Gastrocnemius medialis (tissue), 4 donors: ENCODE measurements at regions of chr9 and their contacts with region 1.

Region 1: GRCh38 chr9:99266255-99267023 is 44.4 kb downstream of the SEC61B start:
- DNase-seq: peak; percentile 53 to 81
- ATAC-seq: peak; percentile 69 to 85
- H3K4me3 ChIP-seq: no peak overlapping the region
- H3K27ac ChIP-seq: peak overlapping the region; percentile 35 to 61 (median 44)
- H3K4me1 ChIP-seq: peaks cover 0 to 9% of the 10 kb centered on the region in 2 donors
- H3K27me3 ChIP-seq: no peaks in the 10 kb centered on the region
- CTCF ChIP-seq: peak; percentile 84 to 91 (median 87)
- POLR2A ChIP-seq: no peak

Region 2: DNA sequence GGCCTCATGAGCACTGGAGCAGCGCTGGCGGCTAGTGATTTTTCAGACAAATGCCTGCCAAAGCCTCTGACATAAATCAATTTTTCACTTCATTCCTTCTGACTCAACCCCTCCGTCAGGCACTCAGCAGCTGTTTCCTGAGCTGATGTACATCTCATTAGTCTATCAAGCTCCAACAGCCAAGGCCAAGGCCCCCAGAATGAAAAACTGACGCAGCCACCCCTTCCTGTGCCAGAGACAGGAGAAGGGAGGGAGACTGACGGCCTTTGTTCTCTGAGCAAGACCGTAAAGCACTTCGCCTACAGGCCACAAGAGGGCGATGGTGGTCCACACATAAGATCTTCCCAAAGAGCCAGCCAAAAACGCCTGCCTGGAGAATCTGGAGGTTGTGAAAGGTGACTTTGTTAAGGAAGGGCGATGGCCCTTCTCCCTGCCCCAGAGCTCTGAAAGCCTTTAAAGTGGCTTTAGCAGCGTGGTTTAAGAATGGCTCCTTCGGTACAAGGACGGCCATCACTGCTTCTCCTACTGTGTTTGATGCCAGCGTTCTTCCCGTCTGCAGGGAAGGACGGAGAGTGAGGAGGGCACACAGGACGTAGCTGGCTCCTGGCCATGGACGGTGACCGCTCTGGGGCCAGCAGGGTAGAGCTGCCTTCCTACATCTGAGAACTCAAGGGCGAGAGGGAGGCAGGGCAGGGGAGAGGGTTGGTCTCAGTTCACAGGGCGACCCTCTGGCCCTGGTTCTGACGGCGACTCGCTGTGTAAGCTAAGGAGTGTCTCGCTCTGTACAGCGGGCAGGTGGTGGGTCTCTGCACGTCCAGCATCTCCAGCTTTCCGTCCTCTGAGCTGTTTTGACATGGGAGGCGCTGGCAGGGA is 81.7 kb before region 1 on chr9:
- in situ Hi-C with region 1: no loop called
- intact Hi-C with region 1: loop called (anchors 10 kb)
- DNase-seq: peak; percentile 70 to 86
- ATAC-seq: peak; percentile 94 to 97
- H3K4me3 ChIP-seq: peak overlapping the region; percentile 3 to 48 (median 40)
- H3K27ac ChIP-seq: peak overlapping the region in 2 of 4 donors; percentile 12 to 30
- H3K4me1 ChIP-seq: peaks cover 0 to 7% of the 10 kb centered on the region in 2 donors
- H3K27me3 ChIP-seq: no peaks in the 10 kb centered on the region
- CTCF ChIP-seq: peak; percentile 90 to 97 (median 92)
- POLR2A ChIP-seq: no peak

Region 3: DNA sequence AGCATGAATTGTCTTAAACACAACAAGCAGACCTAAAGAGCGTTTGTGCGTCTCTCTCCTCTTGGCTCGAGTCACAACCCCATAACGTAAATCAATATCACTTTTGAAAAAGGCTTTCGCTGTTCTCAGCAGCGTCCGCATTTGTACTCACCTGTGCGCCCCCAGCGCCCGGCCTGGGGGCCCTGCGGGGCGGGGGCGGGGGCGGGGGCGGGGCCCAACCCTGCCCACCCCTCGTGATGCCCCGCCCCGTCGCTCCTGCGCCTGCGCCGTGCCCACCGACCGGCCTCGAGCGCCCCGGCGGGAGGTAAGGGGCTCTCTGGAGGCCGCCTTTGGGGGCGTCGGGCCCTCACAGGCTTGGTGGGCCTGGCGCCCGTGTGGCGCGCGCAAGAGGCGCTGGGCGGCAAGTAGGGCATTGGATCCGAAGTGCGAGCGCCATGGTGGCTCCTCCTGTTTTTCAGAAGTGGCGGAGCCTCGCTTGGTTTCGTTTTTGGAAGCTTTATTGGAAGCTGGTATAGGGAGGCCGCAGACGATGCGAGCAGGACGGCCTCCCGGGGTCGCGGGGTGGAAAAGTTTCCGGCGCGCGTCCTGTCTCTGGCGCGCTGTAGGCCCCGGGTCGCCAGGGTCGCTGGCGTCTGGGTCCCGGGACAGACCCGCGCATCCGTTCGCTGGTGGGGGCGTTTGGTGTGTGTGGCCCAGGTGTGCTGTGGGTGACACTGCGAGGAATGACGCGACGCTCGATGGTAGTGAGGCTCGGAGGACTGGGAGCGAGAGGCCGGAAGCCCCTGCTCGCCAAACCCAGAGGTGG is 640.2 kb after region 1 on chr9 and contains the start of gene STX17:
- in situ Hi-C with region 1: no loop called
- intact Hi-C with region 1: loop called (anchors 5 kb)
- DNase-seq: peak; percentile 53 to 70
- ATAC-seq: peak; percentile 89 to 93
- H3K4me3 ChIP-seq: peak within 1 kb of the TSS; percentile 95 to 99 (median 96)
- H3K27ac ChIP-seq: peak within 1 kb of the TSS; percentile 98 to 100 (median 98)
- H3K4me1 ChIP-seq: peaks cover 13 to 21% of the 10 kb centered on the region in 2 donors
- H3K27me3 ChIP-seq: no peaks in the 10 kb centered on the region
- CTCF ChIP-seq: no peak
- POLR2A ChIP-seq: peak; percentile 85 to 90
- total RNA-seq, gene STX17: 25.3 to 34.4 (median 31.6) TPM

Region 4: DNA sequence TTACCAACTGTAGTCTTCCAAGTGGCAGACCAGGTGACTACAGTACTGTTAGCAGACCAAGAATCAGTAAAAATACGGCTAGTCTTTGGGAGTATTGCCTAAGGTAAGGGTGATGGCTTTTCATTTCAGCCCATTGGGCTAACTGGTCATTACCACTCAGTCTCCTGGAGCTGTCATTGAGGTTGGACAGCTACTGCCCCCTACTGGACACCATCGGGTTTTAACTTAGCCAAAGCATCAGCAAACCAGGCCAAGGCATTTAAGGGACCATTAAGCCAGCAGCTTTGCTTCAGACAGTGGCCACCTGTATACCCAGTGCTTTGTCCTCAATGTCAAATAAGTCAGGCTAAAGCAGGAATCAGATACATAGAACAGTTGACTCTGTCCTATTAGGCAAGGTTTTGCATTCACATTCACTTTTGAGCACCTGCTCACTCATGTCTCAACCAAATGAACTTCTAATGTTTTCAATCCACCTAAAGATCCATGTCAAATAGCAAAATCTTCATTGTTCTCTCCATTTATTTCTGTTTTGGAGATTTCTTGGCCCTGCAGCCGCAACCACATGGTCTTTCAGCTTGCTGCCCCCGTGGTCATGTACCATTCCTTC is 949.8 kb after region 1 on chr9:
- in situ Hi-C with region 1: no loop called
- intact Hi-C with region 1: loop called (anchors 5 kb)
- DNase-seq: peak in 1 of 2 donors; percentile 28
- ATAC-seq: peak in 1 of 2 donors; percentile 53
- H3K4me3 ChIP-seq: no peak overlapping the region
- H3K27ac ChIP-seq: no peak overlapping the region
- H3K4me1 ChIP-seq: peaks cover 0 to 4% of the 10 kb centered on the region in 2 donors
- H3K27me3 ChIP-seq: no peaks in the 10 kb centered on the region
- CTCF ChIP-seq: peak; percentile 40 to 70 (median 52)
- POLR2A ChIP-seq: no peak

Region 5: GRCh38 chr9:100322954-100323536 is 1056.6 kb after region 1 on chr9:
- in situ Hi-C with region 1: no loop called
- intact Hi-C with region 1: loop called (anchors 5 kb)
- DNase-seq: no peak
- ATAC-seq: no peak
- H3K4me3 ChIP-seq: no peak overlapping the region
- H3K27ac ChIP-seq: no peak overlapping the region
- H3K4me1 ChIP-seq: no peaks in the 10 kb centered on the region
- H3K27me3 ChIP-seq: no peaks in the 10 kb centered on the region
- CTCF ChIP-seq: peak in 4 of 5 experiments; percentile 24 to 69 (median 49)
- POLR2A ChIP-seq: no peak